Mammary epithelial cell (primary cell): ENCODE measurements at regions of chr10 and their contacts with region 1.

Region 1: GRCh38 chr10:119872860-119873681 is 428 bp upstream of the MCMBP start:
- DNase-seq: peak; percentile 78
- H3K4me3 ChIP-seq: peak overlapping the region; percentile 63 to 83 (median 78)
- H3K27ac ChIP-seq: peak overlapping the region; percentile 77
- H3K4me1 ChIP-seq: peaks cover 2% of the 10 kb centered on the region
- H3K27me3 ChIP-seq: no peaks in the 10 kb centered on the region
- CTCF ChIP-seq: no peak

Region 2: GRCh38 chr10:119892188-119893065 is 19.4 kb after region 1 on chr10 and contains the start of gene SEC23IP:
- CTCF ChIA-PET with region 1: no interaction called
- dilution Hi-C with region 1: no loop called
- in situ Hi-C with region 1: no loop called
- intact Hi-C with region 1: loop called (anchors 1 kb)
- DNase-seq: peak; percentile 93
- H3K4me3 ChIP-seq: peak within 1 kb of the TSS; percentile 84 to 93 (median 85)
- H3K27ac ChIP-seq: peak within 1 kb of the TSS; percentile 66
- H3K4me1 ChIP-seq: peaks cover 34% of the 10 kb centered on the region
- H3K27me3 ChIP-seq: no peaks in the 10 kb centered on the region
- CTCF ChIP-seq: no peak
- total RNA-seq, gene SEC23IP: 29.7 to 66.9 TPM

Region 3: GRCh38 chr10:119908166-119908565 is 35.1 kb after region 1 on chr10:
- CTCF ChIA-PET with region 1: no interaction called
- dilution Hi-C with region 1: no loop called
- in situ Hi-C with region 1: no loop called
- intact Hi-C with region 1: no loop called
- DNase-seq: no peak
- H3K4me3 ChIP-seq: no peak overlapping the region
- H3K27ac ChIP-seq: no peak overlapping the region
- H3K4me1 ChIP-seq: no peaks in the 10 kb centered on the region
- H3K27me3 ChIP-seq: no peaks in the 10 kb centered on the region
- CTCF ChIP-seq: no peak

Region 4: GRCh38 chr10:120387326-120387725 is 514.3 kb after region 1 on chr10:
- CTCF ChIA-PET with region 1: no interaction called
- dilution Hi-C with region 1: no loop called
- in situ Hi-C with region 1: no loop called
- intact Hi-C with region 1: no loop called
- DNase-seq: peak; percentile 38
- H3K4me3 ChIP-seq: no peak overlapping the region
- H3K27ac ChIP-seq: no peak overlapping the region
- H3K4me1 ChIP-seq: peaks cover 5% of the 10 kb centered on the region
- H3K27me3 ChIP-seq: no peaks in the 10 kb centered on the region
- CTCF ChIP-seq: no peak